GM10248 (cell line): ENCODE measurements at regions of chr17 and their contacts with region 1.

Region 1: DNA sequence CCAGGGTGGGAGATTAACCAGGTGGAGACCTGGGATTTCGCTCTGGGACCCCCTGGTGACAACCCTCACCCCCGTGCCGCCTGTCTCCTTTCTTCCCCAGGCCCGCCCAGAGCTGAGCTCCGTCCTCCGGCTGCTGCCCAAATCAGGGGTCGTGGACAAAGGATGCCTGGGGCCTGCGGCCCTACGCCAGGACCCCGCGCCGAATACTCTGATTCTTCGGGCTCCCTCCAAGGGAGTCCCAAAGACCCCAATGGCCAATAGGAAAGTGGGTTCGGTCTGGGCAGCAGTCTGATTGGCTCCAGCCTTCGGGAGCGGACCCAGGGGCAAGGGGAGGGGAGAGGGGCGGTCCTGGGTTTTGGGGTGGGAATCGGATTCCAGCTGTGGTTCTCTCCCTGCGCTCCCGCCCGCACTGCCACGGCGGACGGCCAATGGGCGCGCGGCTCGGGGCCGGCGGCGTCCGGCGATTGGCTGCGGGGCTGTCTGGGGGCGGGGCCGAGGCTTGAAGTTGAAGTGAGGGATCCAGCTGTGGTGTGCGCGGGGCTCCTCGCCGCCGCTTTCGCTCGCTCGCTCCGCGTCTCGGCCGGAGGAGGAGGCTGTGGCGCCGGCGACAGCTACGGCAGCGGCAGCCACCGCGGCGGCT is at the start of gene CACNA1G:
- DNase-seq: peak; percentile 94
- CTCF ChIP-seq: no peak

Region 2: GRCh38 chr17:50440172-50440837 is 120.0 kb before region 1 on chr17:
- CTCF ChIA-PET with region 1: no interaction called
- POLR2A ChIA-PET with region 1: no interaction called
- DNase-seq: no peak
- CTCF ChIP-seq: no peak

Region 3: DNA sequence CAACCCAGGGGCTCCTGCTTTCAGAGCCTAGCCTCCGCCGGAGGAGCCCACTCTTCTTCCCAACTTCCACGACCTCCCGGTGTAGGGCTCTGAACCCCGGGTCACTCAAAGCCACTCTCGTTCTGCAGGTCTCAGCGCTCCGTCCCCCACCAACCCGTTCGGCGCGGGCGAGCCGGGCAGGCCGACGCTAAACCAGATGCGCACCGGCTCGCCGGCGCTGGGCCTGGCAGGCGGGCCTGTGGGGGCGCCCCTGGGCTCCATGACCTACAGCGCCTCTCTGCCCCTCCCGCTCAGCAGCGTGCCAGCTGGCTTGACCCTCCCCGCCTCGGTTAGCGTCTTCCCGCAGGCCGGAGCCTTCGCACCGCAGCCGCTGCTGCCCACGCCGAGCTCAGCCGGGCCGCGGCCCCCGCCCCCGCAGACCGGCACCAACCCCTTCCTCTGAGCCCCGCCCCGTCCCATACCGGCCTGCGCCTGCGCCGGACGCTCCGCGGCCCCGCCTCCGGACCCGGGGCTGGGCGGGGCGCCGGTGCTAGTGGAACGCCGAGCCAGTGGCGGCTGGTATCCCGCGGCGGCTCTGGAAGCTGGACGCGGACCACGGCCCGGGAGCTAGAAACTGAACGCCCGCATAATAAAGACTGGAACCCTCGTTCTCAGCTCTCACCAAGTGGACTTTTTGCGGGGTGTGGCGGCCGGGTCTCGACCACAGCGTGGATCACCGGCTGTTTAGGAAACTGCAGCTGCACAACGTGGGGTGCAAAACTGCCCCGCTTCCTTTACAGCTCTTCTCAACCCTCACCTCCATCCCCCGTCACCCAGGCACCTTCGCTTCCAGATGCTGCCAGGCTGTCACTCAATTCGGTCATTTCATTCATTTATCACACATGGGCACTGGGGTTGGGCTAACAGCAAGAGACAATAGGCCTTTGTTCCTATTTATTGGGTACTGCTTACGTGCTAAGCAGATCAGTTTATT is 18.3 kb before region 1 on chr17:
- CTCF ChIA-PET with region 1: interaction called, 11 read pairs
- POLR2A ChIA-PET with region 1: no interaction called
- DNase-seq: peak; percentile 98
- CTCF ChIP-seq: peak; percentile 27

Region 4: GRCh38 chr17:50547035-50547735 is 13.1 kb before region 1 on chr17 and contains the start of gene SPATA20:
- CTCF ChIA-PET with region 1: interaction called, 27 read pairs
- POLR2A ChIA-PET with region 1: no interaction called
- DNase-seq: peak; percentile 92
- CTCF ChIP-seq: peak; percentile 98